Ascending aorta (tissue), 2 donors: ENCODE measurements at regions of chr10 and their contacts with region 1.

Region 1: DNA sequence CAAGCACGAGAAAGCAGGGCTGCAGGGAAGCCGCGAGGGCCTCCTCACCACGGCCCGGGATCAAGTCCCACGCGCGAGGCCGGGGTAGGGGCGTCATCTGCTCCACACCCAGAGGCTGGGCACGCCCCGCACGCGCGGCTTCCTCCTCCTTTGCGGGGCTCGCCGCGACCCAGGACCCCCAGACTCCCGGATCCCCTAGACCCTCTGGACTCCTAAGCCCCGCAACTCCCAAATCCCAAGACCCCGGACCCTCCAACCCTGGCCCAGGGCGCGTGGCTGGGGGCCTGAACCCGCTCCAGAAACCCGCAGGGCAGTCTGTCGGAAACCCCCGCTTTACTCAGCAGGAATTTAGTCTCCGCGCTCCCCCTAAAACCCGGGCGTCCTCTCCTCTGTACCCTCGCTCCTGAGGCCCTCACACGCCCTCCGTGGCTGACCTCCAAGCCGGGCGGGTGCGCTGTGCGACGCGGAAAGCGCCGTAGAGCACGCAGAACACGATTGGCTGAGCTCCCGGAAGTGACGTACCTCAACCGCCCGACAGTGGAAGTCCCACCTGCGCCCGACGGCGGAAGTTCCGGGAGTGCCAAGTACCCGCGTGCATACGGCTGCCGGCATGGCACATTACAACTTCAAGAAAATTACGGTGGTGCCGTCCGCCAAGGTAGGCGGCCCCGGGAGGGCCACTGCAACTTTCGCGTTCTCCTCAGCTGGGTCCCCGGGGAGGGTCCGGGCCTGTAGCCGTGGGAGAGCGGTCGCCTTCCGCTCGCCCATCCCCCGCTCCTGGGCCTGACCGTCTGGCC is at the start of gene GTPBP4:
- DNase-seq: peak; percentile 84 to 98
- H3K4me3 ChIP-seq: peak within 1 kb of the TSS; percentile 88 to 94
- H3K27ac ChIP-seq: peak within 1 kb of the TSS; percentile 86 to 94
- H3K4me1 ChIP-seq: peaks cover 8 to 17% of the 10 kb centered on the region in 2 donors
- H3K27me3 ChIP-seq: no peaks in the 10 kb centered on the region
- CTCF ChIP-seq: peak in 1 of 3 experiments; percentile 13
- total RNA-seq, gene GTPBP4: 9.0 TPM

Region 2: DNA sequence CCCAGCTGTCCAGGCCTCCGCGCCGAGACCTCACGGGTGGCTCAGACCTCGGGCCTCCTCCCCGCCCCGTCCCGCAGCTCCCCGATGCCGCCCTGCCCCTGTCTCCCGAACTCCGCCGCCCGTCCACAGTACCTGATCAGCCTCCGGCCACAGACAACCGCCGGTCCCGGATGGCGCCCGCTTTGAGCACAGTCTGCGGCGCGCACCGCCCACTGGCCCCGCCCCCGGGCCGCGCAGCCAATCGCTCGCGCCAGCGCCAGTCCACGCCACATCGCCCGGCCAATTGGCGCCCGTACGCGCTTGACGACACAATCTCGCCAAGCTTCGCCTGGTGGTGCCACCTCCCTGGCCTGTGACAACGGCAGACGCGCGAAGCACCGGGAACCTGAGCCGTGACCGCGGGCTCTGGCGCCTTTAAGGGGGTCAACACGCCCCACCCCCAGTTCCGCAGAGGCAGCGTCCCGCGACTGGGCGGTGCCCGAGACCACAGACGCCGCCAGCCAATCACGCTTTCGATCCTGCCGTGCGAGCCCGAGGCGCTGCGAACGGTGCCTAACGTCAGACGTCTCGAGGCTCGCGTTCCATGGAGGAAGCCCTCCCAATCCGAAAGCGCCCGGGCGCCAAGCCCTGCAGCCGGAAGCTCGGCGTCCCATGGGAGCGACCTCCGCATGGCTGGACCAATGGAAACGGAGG is 60.8 kb after region 1 on chr10 and contains the start of gene IDI1:
- intact Hi-C with region 1: loop called (anchors 1 kb)
- DNase-seq: peak; percentile 91 to 99
- H3K4me3 ChIP-seq: peak within 1 kb of the TSS; percentile 86 to 87
- H3K27ac ChIP-seq: peak within 1 kb of the TSS; percentile 98 to 100
- H3K4me1 ChIP-seq: peaks cover 0 to 18% of the 10 kb centered on the region in 2 donors
- H3K27me3 ChIP-seq: no peaks in the 10 kb centered on the region
- CTCF ChIP-seq: no peak
- total RNA-seq, gene IDI1: 3.8 TPM

Region 3: GRCh38 chr10:1056326-1057105 is 68.4 kb after region 1 on chr10 and contains the start of gene WDR37:
- intact Hi-C with region 1: loop called (anchors 2 kb)
- DNase-seq: peak in 1 of 2 donors; percentile 91
- H3K4me3 ChIP-seq: peak within 1 kb of the TSS; percentile 76 to 95
- H3K27ac ChIP-seq: peak within 1 kb of the TSS; percentile 97 to 100
- H3K4me1 ChIP-seq: peaks cover 6 to 12% of the 10 kb centered on the region in 2 donors
- H3K27me3 ChIP-seq: no peaks in the 10 kb centered on the region
- CTCF ChIP-seq: no peak
- total RNA-seq, gene WDR37: 4.4 TPM